ENCODE measurements at regions of chr2 and their contacts with region 1.

Region 1: GRCh38 chr2:134336352-134336751 is 82.5 kb downstream of the MGAT5 start:
- DNase-seq: peak; percentile 53
- ATAC-seq: peak; percentile 96
- H3K4me3 ChIP-seq: no peak overlapping the region
- H3K27ac ChIP-seq: peak overlapping the region; percentile 48
- H3K4me1 ChIP-seq: peaks cover 25% of the 10 kb centered on the region
- H3K27me3 ChIP-seq: no peaks in the 10 kb centered on the region
- CTCF ChIP-seq: no peak
- EP300 ChIP-seq: peak in 1 of 2 experiments; percentile 67; a peak in 1 of 4 replicates
- POLR2A ChIP-seq: no peak
- RAD21 ChIP-seq: no peak

Region 2: DNA sequence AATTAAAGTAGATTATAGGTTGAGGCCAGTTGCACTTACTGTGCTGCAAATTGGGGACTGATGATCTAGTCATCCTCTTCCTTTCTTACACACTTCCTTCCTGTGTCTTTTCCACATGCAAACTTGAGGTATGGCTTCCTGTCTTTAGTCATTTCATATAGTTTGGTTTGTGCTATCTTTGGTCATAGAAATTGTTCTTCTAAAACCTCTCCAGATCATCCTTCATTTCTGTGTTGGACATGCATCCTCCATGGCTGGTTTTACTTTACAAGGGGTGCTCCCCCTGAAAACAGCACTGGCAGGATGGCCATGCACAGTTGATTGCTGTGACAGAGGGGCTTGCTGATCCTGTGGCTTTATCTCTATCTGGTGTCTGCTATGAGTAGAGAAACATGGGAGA is 46.0 kb before region 1 on chr2:
- CTCF ChIA-PET with region 1: interaction called, 3 read pairs
- POLR2A ChIA-PET with region 1: interaction called, 4 read pairs
- RAD21 ChIA-PET with region 1: interaction called, 3 read pairs
- SMC1A ChIA-PET with region 1: interaction called, 3 read pairs
- in situ Hi-C with region 1: no loop called
- intact Hi-C with region 1: loop called (anchors 2 kb)
- DNase-seq: peak; percentile 60
- ATAC-seq: peak; percentile 38
- H3K4me3 ChIP-seq: peak overlapping the region; percentile 11; the same call in 1 of the 2 replicates
- H3K27ac ChIP-seq: peak overlapping the region; percentile 82
- H3K4me1 ChIP-seq: peaks cover 94% of the 10 kb centered on the region
- H3K27me3 ChIP-seq: no peaks in the 10 kb centered on the region
- CTCF ChIP-seq: no peak
- EP300 ChIP-seq: peak in 1 of 2 experiments; percentile 22; a peak in 1 of 4 replicates
- POLR2A ChIP-seq: no peak
- RAD21 ChIP-seq: peak; percentile 3; the same call in 1 of the 2 replicates

Region 3: GRCh38 chr2:134581877-134582546 is 245.7 kb after region 1 on chr2:
- CTCF ChIA-PET with region 1: no interaction called
- POLR2A ChIA-PET with region 1: no interaction called
- RAD21 ChIA-PET with region 1: no interaction called
- SMC1A ChIA-PET with region 1: no interaction called
- in situ Hi-C with region 1: no loop called
- intact Hi-C with region 1: no loop called
- DNase-seq: peak; percentile 49
- ATAC-seq: peak; percentile 49; the same call in 2 of the 3 replicates
- H3K4me3 ChIP-seq: no peak overlapping the region
- H3K27ac ChIP-seq: peak overlapping the region; percentile 38
- H3K4me1 ChIP-seq: peaks cover 16% of the 10 kb centered on the region
- H3K27me3 ChIP-seq: no peaks in the 10 kb centered on the region
- CTCF ChIP-seq: no peak
- EP300 ChIP-seq: no peak
- POLR2A ChIP-seq: no peak
- RAD21 ChIP-seq: no peak